H1 (cell line): ENCODE measurements at regions of chr12 and their contacts with region 1.

Region 1: DNA sequence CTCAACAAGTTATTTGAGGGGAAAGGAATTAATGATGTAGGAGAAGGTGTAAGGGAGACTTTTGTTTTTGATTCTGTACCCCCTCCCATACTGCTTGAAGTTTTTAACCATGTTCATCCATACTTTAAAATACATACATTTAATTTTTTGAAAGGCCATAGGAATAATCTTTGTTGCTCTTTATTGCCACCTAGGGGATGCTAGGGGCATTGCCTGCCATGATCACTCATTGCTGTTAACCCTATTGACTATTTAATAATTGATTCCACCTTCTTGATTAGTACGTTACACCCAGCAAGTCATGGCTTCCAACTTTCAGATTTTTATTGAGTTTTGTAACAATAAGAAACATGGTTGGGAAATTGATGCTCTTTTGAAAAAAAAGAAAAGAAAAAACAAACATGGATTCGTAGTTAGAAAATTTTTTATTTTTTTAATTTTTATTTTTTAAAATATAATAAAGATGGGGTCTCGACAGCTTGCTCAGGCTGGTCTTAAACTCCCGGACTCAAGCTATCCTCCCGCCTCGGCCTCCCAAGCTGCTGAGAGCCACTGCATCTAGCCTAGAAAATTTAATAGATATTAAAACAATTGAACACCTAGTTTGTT is 8.5 kb upstream of the PRKAB1 start:
- DNase-seq: no peak
- H3K4me3 ChIP-seq: no peak overlapping the region
- H3K27ac ChIP-seq: no peak overlapping the region
- H3K4me1 ChIP-seq: no peaks in the 10 kb centered on the region
- H3K27me3 ChIP-seq: no peaks in the 10 kb centered on the region; a peak in 1 of 7 replicates
- CTCF ChIP-seq: peak in 2 of 3 experiments; percentile 41 to 71; a peak in 2 of 4 replicates
- EP300 ChIP-seq: no peak
- POLR2A ChIP-seq: no peak
- RAD21 ChIP-seq: peak; percentile 34 to 39

Region 2: DNA sequence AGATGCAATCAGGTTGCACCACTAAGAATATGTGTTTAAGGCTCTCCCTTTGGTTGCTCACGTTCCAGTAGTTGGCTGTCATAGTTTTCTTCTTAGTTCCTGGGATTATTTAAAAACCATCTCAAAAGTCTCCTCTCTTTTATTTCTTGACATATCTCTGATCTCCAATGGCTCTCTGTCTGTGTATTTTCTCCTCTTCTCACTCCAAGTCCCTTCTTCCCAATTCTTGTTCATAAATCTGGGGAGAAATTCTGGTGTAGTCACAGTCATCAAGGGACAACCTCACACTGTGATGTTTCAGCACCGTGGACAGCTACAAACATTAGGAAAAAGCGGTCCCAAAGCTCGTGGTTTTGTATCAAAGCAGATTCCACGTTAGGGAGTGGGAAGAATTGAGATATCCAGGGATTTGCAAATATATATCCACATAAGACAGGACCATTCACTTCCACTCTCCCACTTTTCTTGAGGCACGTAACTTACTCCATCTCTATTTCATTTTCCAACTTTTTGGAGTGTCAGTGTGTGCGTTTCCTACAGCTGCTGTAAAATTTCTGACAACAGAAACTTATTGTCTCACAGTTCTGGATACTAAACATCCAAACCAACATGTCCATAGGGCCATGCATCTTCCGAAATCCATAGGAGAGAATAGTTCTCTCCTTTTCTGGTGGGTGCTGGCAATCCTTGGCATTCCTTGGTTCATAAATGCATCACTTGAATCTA is 146.5 kb before region 1 on chr12:
- CTCF ChIA-PET with region 1: no interaction called
- POLR2A ChIA-PET with region 1: no interaction called
- DNase-seq: peak in 1 of 2 experiments; percentile 59
- H3K4me3 ChIP-seq: no peak overlapping the region
- H3K27ac ChIP-seq: no peak overlapping the region
- H3K4me1 ChIP-seq: no peaks in the 10 kb centered on the region; a peak in 1 of 7 replicates
- H3K27me3 ChIP-seq: no peaks in the 10 kb centered on the region
- CTCF ChIP-seq: no peak
- EP300 ChIP-seq: no peak
- POLR2A ChIP-seq: no peak
- RAD21 ChIP-seq: no peak

Region 3: GRCh38 chr12:119528241-119528640 is 131.2 kb before region 1 on chr12:
- CTCF ChIA-PET with region 1: no interaction called
- POLR2A ChIA-PET with region 1: no interaction called
- DNase-seq: no peak
- H3K4me3 ChIP-seq: no peak overlapping the region
- H3K27ac ChIP-seq: no peak overlapping the region
- H3K4me1 ChIP-seq: no peaks in the 10 kb centered on the region
- H3K27me3 ChIP-seq: no peaks in the 10 kb centered on the region
- CTCF ChIP-seq: no peak
- EP300 ChIP-seq: no peak
- POLR2A ChIP-seq: no peak
- RAD21 ChIP-seq: no peak

Region 4: DNA sequence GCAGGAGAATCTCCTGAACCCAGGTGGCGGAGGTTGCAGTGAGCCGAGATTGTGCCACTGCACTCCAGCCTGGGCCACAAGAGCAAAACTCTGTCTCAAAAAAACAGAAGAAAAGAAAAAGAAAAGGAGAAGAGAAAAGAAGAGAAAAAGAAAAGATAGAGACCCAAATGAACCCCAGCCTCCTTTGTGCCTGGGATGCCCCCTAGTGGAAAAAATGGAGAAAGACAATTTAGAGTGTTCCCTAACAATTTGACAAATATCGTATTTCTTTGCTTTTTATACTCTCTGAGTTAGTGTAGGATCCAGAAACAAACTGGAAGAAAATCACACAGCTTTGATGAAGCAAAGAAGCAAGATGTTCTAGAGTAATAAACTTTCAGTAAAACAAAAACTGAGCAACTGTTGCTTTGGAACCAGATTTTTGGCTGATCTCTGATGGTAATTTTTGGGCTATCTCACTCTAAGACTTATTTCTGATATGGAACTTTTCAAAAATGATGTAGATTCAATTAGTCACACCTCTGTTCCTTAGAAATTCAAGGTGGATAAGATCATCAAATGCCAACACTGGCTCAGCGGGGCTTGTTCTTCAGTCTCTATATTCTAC is 10.1 kb before region 1 on chr12:
- CTCF ChIA-PET with region 1: interaction called, 19 read pairs
- POLR2A ChIA-PET with region 1: no interaction called
- DNase-seq: no peak
- H3K4me3 ChIP-seq: no peak overlapping the region
- H3K27ac ChIP-seq: no peak overlapping the region
- H3K4me1 ChIP-seq: no peaks in the 10 kb centered on the region
- H3K27me3 ChIP-seq: no peaks in the 10 kb centered on the region
- CTCF ChIP-seq: peak in 2 of 3 experiments; percentile 50 to 74; a peak in 2 of 4 replicates
- EP300 ChIP-seq: no peak
- POLR2A ChIP-seq: no peak
- RAD21 ChIP-seq: peak; percentile 72

Region 5: GRCh38 chr12:119835068-119835467 is 175.7 kb after region 1 on chr12:
- CTCF ChIA-PET with region 1: no interaction called
- POLR2A ChIA-PET with region 1: no interaction called
- DNase-seq: no peak
- H3K4me3 ChIP-seq: no peak overlapping the region
- H3K27ac ChIP-seq: no peak overlapping the region
- H3K4me1 ChIP-seq: no peaks in the 10 kb centered on the region
- H3K27me3 ChIP-seq: no peaks in the 10 kb centered on the region
- CTCF ChIP-seq: peak; percentile 28 to 44 (median 29); a peak in 3 of 4 replicates
- EP300 ChIP-seq: no peak
- POLR2A ChIP-seq: no peak
- RAD21 ChIP-seq: peak in 1 of 2 experiments; percentile 19; a peak in 1 of 4 replicates